ENCODE measurements at regions of chr5 and their contacts with region 1.

Region 1: GRCh38 chr5:131382407-131383395 is 118.8 kb downstream of the CDC42SE2 start:
- DNase-seq: peak; percentile 64
- H3K4me3 ChIP-seq: no peak overlapping the region
- H3K27ac ChIP-seq: peak overlapping the region in 1 of 2 experiments; percentile 51; a peak in 2 of 4 replicates
- H3K4me1 ChIP-seq: peaks cover 25 to 32% of the 10 kb centered on the region in 2 experiments
- H3K27me3 ChIP-seq: no peaks in the 10 kb centered on the region
- CTCF ChIP-seq: peak; percentile 61
- EP300 ChIP-seq: peak in 1 of 2 experiments; percentile 83; a peak in 2 of 4 replicates
- RAD21 ChIP-seq: peak; percentile 79

Region 2: DNA sequence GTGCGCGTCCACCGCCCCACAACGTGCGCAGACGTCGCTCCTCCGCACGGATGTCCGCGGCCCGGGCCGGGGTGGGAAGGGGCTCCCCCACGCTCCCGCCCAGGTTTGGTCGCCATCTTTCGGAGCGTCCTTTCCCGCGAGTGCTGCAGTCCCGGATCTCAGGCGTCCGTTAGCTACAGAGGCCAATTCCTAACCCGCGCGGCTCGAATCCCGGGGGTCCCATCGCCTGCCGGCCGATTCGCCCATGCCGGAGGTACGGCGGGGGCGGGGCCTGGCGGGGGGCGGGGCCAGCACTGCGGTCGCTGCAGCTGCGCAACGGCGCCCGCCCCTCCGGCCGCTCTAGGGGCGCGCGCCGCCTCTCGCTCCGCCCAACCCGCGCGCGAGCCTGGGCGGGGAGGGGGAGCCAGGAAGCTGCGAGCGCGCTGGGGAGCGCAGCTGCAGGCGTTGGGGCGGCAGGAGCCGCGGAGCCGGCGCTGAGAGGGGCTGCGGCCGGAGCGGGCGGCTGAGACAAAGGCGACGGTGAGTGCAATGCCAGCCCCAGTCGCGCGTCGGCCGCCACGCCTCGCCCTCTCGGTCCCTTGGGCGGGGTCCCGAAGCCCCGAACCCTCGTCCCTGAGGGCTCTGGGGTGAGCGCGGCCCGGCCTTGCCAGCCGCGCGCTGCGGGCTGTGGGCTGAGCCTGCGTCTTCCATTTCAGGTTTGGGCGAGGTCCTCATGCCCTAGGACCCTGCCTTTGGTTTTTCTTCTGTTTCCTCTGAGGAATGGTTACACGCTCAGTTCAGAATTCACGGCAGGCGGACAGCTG is 118.9 kb before region 1 on chr5 and contains the start of gene CDC42SE2:
- CTCF ChIA-PET with region 1: interaction called, 15 read pairs
- POLR2A ChIA-PET with region 1: no interaction called
- DNase-seq: peak; percentile 97
- H3K4me3 ChIP-seq: peak within 1 kb of the TSS; percentile 95
- H3K27ac ChIP-seq: peak within 1 kb of the TSS; percentile 73 to 93
- H3K4me1 ChIP-seq: peaks cover 5 to 7% of the 10 kb centered on the region in 2 experiments; a peak in 2 of 4 replicates
- H3K27me3 ChIP-seq: no peaks in the 10 kb centered on the region
- CTCF ChIP-seq: no peak
- EP300 ChIP-seq: no peak
- RAD21 ChIP-seq: 0 out of 2 replicates have a peak, but pooled peaks have one; percentile 1
- polyA plus RNA-seq, gene CDC42SE2: 8.6 and 11.4 TPM in 2 replicates

Measured in SK-N-SH (cell line).